T-cell (primary cell): ENCODE measurements at regions of chr10 and their contacts with region 1.

Region 1: GRCh38 chr10:73467206-73467605 is 28.6 kb downstream of the PPP3CB start:
- DNase-seq: no peak
- ATAC-seq: no peak
- H3K4me3 ChIP-seq: no peak overlapping the region
- H3K4me3 Mint-ChIP-seq: no peak overlapping the region
- H3K27ac ChIP-seq: no peak overlapping the region
- H3K27ac Mint-ChIP-seq: no peak overlapping the region
- H3K4me1 ChIP-seq: no peaks in the 10 kb centered on the region
- H3K4me1 Mint-ChIP-seq: peaks cover 0 to 4% (median 2%) of the 10 kb centered on the region in 3 donors
- H3K27me3 ChIP-seq: no peaks in the 10 kb centered on the region
- H3K27me3 Mint-ChIP-seq: no peaks in the 10 kb centered on the region

Region 2: DNA sequence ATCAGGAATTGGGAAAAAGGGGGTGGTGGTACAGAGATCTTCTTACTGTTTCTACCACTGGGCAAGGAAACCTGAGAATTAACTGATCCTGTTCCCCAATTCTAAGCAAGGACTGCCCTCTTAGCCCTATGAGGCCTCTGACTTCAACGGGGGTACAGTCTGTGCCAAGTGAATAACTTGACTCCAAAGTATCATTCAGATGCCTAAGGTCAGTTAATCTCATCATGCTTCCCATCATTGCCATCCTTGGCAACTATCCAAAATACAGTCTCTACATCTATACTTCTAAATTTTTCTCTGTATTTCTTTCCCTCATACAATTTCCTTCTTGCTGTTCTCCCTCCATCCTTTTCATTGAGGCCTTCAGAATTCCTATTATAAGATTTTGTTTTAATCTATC is 18.1 kb after region 1 on chr10:
- CTCF ChIA-PET with region 1: no interaction called
- POLR2A ChIA-PET with region 1: interaction called in 1 of 2 experiments, 10 read pairs
- DNase-seq: no peak
- ATAC-seq: no peak
- H3K4me3 ChIP-seq: no peak overlapping the region
- H3K4me3 Mint-ChIP-seq: no peak overlapping the region
- H3K27ac ChIP-seq: no peak overlapping the region
- H3K27ac Mint-ChIP-seq: no peak overlapping the region
- H3K4me1 ChIP-seq: no peaks in the 10 kb centered on the region
- H3K4me1 Mint-ChIP-seq: peaks cover 28 to 40% (median 33%) of the 10 kb centered on the region in 3 donors
- H3K27me3 ChIP-seq: no peaks in the 10 kb centered on the region
- H3K27me3 Mint-ChIP-seq: no peaks in the 10 kb centered on the region